ENCODE measurements at regions of chr1 and their contacts with region 1.

Region 1: GRCh38 chr1:236451796-236452373 is 57.8 kb downstream of the EDARADD start:
- DNase-seq: no peak
- ATAC-seq: no peak
- H3K4me3 ChIP-seq: no peak overlapping the region
- H3K27ac ChIP-seq: no peak overlapping the region
- H3K4me1 ChIP-seq: no peaks in the 10 kb centered on the region
- H3K27me3 ChIP-seq: no peaks in the 10 kb centered on the region
- CTCF ChIP-seq: peak; percentile 7

Region 2: GRCh38 chr1:237005674-237006073 is 553.8 kb after region 1 on chr1:
- intact Hi-C with region 1: loop called in 1 of 2 experiments (anchors 10 kb)
- DNase-seq: no peak
- ATAC-seq: no peak
- H3K4me3 ChIP-seq: no peak overlapping the region
- H3K27ac ChIP-seq: no peak overlapping the region
- H3K4me1 ChIP-seq: no peaks in the 10 kb centered on the region
- H3K27me3 ChIP-seq: no peaks in the 10 kb centered on the region
- CTCF ChIP-seq: no peak